ENCODE measurements at regions of chr21 and their contacts with region 1.

Region 1: GRCh38 chr21:20030390-20030789 is 967.8 kb upstream of the NCAM2 start:
- DNase-seq: no peak
- ATAC-seq: peak; percentile 91

Region 2: GRCh38 chr21:18951271-18952065 is 1078.9 kb before region 1 on chr21:
- intact Hi-C with region 1: loop called (anchors 10 kb)
- DNase-seq: no peak
- ATAC-seq: no peak

Region 3: GRCh38 chr21:20259031-20259867 is 228.9 kb after region 1 on chr21:
- intact Hi-C with region 1: no loop called
- DNase-seq: no peak
- ATAC-seq: peak; percentile 86